ENCODE measurements at regions of chr16 and their contacts with region 1.

Region 1: DNA sequence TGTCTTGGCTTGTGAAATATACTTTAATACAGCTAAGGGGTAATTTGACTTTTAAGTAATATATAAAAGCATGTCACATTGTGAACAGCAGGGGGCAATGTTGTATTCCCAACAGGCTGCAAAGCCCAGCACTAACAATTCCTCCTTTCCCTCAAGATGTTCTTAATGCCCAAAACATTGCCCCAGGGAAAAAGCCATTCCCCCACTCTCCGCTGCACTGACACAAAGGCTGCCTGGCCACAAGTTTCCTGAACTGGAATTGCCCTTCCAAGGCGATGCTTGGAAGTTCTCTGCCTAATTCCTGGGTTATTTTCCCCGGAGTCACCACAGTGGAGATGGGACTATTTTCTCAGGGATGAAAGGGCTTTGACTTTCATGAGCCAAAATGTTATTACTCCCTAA is 27.2 kb downstream of the CLEC16A start:
- DNase-seq: no peak
- ATAC-seq: peak; percentile 76 to 81
- H3K4me3 ChIP-seq: no peak overlapping the region
- H3K27ac ChIP-seq: no peak overlapping the region
- H3K4me1 ChIP-seq: peaks cover 9% of the 10 kb centered on the region
- H3K27me3 ChIP-seq: no peaks in the 10 kb centered on the region
- CTCF ChIP-seq: peak; percentile 73

Region 2: DNA sequence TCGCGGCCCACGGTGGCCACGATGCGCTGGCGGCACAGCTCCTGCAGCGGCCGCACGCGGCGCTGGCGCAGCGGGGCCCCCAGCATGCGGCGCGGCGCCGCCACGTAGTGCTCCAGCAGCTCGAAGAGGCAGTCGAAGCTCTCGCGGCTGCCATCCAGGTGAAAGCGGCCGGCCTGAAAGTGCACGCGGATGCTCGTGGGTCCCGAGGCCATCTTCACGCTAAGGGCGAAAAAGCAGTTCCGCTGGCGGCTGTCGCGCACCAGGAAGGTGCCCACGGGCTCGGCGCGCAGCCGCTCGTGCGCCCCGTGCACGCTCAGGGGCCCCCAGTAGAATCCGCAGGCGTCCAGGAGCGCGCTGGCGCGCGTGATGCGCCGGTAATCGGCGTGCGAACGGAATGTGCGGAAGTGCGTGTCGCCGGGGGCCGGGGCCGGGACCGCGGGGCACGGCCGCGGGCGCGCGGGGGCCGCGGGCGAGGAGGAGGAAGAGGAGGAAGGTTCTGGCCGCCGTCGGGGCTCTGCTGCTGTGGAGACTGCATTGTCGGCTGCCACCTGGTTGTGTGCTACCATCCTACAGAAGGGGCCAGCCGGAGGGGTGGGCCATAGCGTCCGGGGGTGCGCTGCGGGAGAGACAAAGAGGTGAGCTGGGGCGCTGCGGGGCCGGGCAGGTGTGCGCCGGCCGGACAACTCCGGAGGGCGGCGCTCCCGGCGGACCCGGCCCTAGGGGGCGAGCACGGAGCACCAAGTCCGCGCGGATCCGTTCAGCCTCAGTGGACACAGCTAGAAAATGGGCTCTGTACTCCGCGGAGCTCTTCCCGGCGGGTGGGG is 283.6 kb after region 1 on chr16:
- intact Hi-C with region 1: loop called (anchors 5 kb)
- DNase-seq: peak; percentile 74
- ATAC-seq: peak; percentile 3 to 7
- H3K4me3 ChIP-seq: peak overlapping the region; percentile 90
- H3K27ac ChIP-seq: peak overlapping the region; percentile 98
- H3K4me1 ChIP-seq: peaks cover 56% of the 10 kb centered on the region
- H3K27me3 ChIP-seq: no peaks in the 10 kb centered on the region
- CTCF ChIP-seq: no peak